Dendritic cell treated with granulocyte-macrophage colony-stimulating factor and Interleukin-4, amounts not matched to agents 40 ng/mL and 50 ng/mL, for 4 days (primary cell): ENCODE measurements at regions of chr7 and their contacts with region 1.

Region 1: DNA sequence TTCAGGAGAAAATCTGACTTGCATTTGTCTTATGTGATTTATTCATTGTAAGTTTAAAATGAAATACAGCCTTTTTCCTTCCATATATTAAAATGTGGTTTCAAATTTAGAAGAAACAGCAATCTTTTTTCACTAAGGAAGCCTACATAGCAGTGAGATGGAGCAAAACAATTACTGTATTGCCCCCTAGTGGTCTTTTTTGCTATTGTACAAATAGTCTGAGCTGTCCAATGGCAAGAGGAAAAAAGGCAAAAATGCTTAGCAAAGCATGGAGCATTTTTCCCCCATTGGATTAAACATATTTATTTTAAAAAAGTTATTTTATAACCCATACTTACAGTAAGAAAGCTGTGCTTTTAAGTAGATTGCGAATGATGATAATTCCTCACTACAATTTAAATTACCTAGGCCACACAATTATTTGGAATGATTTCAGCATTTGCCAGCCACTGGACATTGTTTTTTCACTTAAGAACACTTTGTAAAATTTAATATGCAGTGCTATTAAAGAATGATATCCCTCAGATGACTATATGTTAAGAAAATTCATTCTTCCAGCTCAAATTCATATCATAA is 119.5 kb downstream of the CPED1 start:
- H3K4me3 Mint-ChIP-seq: no peak overlapping the region
- H3K27ac Mint-ChIP-seq: no peak overlapping the region
- H3K4me1 Mint-ChIP-seq: no peaks in the 10 kb centered on the region
- H3K27me3 Mint-ChIP-seq: no peaks in the 10 kb centered on the region

Region 2: DNA sequence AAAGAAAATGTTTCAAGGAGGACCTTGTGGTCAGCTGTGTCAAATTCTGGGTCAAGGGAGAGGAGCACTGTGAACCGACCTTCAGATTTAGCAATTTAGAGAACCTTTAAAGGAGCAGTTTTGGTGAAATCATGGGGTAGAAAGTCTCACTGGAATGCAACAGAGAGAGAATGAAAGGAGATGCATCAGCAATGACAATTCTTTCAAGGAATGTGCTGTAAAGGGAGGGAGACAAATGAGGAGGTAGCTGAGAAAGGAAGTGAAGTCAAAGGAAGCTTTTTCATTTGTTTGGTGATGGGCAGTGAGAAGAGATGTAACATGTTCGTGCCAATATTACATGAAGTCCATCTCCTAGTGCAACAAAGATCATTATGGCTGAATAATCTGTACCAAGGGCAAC is 416.1 kb before region 1 on chr7:
- intact Hi-C with region 1: no loop called
- H3K4me3 Mint-ChIP-seq: no peak overlapping the region
- H3K27ac Mint-ChIP-seq: no peak overlapping the region
- H3K4me1 Mint-ChIP-seq: no peaks in the 10 kb centered on the region
- H3K27me3 Mint-ChIP-seq: peaks cover 58% of the 10 kb centered on the region

Region 3: DNA sequence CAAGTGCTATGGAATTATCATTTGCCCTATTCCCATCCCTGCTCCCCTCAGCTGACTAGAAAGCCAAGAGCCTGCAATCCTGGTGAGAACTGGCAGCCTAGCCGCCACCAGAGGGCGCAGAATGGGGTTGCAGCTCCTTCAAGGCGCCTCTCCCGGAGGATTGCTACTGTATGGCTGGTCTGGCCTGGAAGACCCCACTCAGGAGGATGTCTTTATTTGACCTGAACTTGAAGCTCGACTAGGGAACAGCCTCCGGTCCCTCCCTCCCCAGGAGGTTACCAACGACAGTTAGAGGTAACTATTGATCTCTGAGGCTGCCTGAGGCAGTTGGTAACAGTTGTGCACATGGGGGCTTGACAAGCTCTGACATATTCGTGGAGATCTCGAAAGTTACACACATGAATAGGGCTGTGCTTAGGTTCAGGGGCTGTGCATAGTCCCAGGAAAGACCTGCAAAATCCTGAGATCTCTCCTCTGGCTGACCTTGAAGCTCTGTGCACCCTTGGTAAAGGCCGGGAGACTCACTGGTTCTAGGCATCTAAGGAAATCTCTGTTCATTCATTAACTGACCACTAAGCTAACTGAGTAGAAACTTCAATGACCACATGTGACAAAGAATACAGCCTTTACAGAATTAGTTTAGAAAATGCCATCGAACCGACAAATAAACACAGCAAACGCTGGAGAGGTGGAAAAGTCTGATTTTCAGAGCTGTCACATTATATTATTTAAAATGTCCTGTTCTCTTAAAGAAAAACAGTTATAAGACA is 315.7 kb before region 1 on chr7:
- intact Hi-C with region 1: loop called (anchors 5 kb)
- H3K4me3 Mint-ChIP-seq: no peak overlapping the region
- H3K27ac Mint-ChIP-seq: no peak overlapping the region
- H3K4me1 Mint-ChIP-seq: no peaks in the 10 kb centered on the region
- H3K27me3 Mint-ChIP-seq: no peaks in the 10 kb centered on the region

Region 4: DNA sequence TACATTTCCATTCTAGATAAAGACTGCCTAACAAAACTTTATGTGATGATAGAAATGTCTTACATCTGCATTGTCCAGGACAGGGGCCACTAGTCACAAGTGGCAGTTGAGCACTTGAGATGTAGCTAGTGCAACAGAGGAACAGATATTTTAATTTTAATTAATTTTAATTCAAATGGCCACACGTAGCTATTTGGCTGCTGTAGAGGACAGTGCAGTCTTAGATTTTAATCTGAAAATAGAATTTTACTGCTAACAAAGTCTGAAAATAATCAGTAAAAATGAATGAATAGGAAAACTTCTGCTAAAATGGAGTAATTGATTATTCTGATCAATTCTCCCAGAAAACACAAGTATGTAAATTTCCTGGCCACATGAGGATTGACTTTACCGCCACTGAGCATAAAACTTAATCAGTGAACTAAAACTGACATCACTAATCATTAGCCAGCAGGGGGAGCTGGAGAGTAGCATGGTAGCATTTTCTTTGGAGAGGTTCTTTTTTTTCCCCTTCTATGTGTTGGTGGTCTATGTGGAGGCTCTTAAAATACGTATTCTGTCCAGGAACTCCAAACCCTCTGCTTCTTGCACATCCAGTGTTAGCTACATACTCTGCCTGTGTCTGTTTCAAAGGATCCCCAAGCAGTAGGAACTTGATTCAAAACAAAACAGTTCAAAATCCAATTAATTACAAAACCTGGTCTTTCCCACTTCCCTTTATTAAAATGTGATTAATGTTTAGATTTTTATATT is 302.2 kb before region 1 on chr7:
- intact Hi-C with region 1: loop called (anchors 1 kb)
- H3K4me3 Mint-ChIP-seq: no peak overlapping the region
- H3K27ac Mint-ChIP-seq: no peak overlapping the region
- H3K4me1 Mint-ChIP-seq: no peaks in the 10 kb centered on the region
- H3K27me3 Mint-ChIP-seq: no peaks in the 10 kb centered on the region